Posterior cingulate gyrus (tissue), 11 donors: ENCODE measurements at regions of chr1 and their contacts with region 1.

Region 1: GRCh38 chr1:19096036-19096833 is 113.8 kb downstream of the UBR4 start:
- DNase-seq: peak in 8 of 10 donors; percentile 49 to 91 (median 60)

Region 2: GRCh38 chr1:18907021-18907916 is 189.0 kb before region 1 on chr1:
- intact Hi-C with region 1: loop called (anchors 5 kb)
- DNase-seq: peak in 6 of 10 donors; percentile 37 to 93 (median 58)